ENCODE measurements at regions of chr6 and their contacts with region 1.

Region 1: DNA sequence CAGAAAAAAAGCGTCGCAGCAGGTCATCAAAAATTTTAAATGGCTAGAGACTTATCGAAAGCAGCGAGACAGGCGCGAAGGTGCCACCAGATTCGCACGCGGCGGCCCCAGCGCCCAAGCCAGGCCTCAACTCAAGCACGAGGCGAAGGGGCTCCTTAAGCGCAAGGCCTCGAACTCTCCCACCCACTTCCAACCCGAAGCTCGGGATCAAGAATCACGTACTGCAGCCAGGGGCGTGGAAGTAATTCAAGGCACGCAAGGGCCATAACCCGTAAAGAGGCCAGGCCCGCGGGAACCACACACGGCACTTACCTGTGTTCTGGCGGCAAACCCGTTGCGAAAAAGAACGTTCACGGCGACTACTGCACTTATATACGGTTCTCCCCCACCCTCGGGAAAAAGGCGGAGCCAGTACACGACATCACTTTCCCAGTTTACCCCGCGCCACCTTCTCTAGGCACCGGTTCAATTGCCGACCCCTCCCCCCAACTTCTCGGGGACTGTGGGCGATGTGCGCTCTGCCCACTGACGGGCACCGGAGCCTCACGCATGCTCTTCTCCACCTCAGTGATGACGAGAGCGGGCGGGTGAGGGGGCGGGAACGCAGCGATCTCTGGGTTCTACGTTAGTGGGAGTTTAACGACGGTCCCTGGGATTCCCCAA is at the start of gene EEF1A1:
- DNase-seq: peak; percentile 99 to 100 (median 99)
- H3K4me3 ChIP-seq: peak within 1 kb of the TSS; percentile 98
- H3K4me3 Mint-ChIP-seq: peak within 1 kb of the TSS; percentile 89 to 99 (median 96)
- H3K27ac ChIP-seq: peak within 1 kb of the TSS; percentile 100
- H3K27ac Mint-ChIP-seq: peak within 1 kb of the TSS; percentile 92 to 99 (median 99)
- H3K4me1 ChIP-seq: peaks cover 48% of the 10 kb centered on the region
- H3K4me1 Mint-ChIP-seq: peaks cover 64 to 71% (median 64%) of the 10 kb centered on the region in 3 donors
- H3K27me3 ChIP-seq: no peaks in the 10 kb centered on the region
- H3K27me3 Mint-ChIP-seq: peaks cover 0 to 11% of the 10 kb centered on the region in 2 donors
- total RNA-seq, gene EEF1A1: 8,526 to 8,727 TPM

Region 2: DNA sequence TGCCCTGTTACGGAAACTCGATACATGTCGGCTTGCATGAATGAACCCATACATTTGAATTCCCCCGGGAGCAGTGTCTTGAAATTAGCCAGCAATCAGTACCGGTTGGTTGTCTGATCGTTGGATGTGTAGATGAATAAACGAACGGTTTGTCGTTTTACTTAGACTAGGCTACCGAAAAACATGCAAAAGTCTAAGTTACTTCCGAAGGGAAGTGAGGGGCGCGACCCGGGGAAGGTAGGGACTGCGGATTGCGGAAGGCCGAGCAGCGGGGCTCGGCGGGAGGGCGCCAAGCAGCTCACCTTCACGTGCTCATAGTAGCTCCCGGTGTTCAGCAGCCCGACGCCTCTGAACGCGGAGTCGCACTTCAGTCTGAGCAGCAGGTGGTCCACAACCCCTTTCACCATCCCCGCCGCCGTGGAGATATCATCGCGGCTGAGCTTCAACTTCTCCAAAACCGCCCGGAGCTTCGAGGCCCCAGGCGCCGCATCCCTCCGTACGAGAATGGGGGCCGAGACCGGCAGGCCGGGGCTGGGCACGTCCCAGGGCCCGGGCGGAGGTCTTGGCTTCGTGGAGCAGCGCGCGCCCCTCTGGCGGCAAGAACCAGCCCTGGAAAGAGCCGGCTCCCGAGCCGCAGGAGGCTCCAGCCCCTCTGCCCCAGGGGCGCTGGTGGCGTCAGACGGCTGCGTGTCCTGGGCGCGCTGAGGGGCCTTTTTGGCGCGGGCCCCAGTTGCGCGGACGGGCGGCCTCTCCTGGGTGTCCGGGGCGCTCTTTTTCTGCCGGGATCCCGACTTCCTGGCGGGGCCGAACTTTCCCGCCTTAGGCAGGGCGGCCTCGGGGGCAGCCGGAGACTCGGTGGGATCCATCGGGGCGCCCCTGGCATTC is 69.4 kb before region 1 on chr6:
- CTCF ChIA-PET with region 1: interaction called, 4 read pairs
- POLR2A ChIA-PET with region 1: interaction called, 17 read pairs
- DNase-seq: peak; percentile 23 to 65 (median 43)
- H3K4me3 ChIP-seq: peak overlapping the region; percentile 78
- H3K4me3 Mint-ChIP-seq: peak overlapping the region; percentile 94 to 100 (median 97)
- H3K27ac ChIP-seq: peak overlapping the region; percentile 33
- H3K27ac Mint-ChIP-seq: peak overlapping the region; percentile 84 to 99 (median 92)
- H3K4me1 ChIP-seq: peaks cover 15% of the 10 kb centered on the region
- H3K4me1 Mint-ChIP-seq: peaks cover 21 to 44% (median 37%) of the 10 kb centered on the region in 3 donors
- H3K27me3 ChIP-seq: no peaks in the 10 kb centered on the region
- H3K27me3 Mint-ChIP-seq: peaks cover 0 to 2% of the 10 kb centered on the region in 2 donors

Region 3: DNA sequence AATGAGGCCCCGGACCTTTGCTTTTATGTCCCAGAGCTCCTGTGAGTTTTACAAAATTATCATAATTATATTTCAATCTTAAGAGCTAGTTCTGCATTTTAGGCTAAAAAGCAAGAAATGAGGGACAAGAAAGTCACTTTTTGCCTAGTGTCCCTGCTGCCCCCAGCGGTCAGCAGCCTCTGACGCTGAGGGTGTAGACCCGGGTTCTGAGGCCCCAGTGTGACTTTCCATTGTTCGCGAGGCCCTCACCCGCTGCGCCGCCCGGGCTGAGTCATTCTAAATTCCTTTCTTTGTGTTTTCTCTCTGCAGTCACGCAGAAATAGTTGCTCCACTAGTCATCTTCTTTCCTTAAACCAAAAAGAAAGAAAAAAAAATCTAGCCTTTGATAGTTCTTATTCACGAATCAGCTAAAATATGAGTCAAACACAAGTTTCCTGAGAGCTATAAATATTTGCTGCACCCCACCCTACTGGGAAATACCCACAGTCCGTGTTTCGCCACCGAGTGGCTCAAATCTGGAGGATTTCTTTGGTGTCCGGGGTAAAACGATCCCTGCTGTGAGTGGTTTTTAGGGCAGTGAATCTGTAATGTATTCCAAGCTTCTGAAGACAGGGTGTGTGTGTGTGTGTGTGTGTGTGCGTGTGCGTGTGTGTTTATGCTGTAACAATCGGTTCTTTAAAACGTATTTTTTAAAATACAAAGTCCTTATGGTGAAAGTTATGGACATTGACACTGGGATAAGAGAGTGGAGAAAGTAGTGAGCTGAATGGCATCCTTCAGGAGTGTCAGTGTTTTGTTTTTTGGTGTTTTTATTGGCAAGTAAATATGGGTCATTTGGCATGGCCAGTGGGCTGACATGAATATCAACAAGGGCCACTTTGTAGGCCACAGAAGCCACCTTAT is 59.7 kb after region 1 on chr6:
- CTCF ChIA-PET with region 1: interaction called, 6 read pairs
- POLR2A ChIA-PET with region 1: interaction called, 67 read pairs
- DNase-seq: peak; percentile 17 to 72 (median 36)
- H3K4me3 ChIP-seq: peak overlapping the region; percentile 33
- H3K4me3 Mint-ChIP-seq: peak overlapping the region; percentile 47 to 88 (median 80)
- H3K27ac ChIP-seq: peak overlapping the region; percentile 66
- H3K27ac Mint-ChIP-seq: peak overlapping the region; percentile 89 to 99 (median 95)
- H3K4me1 ChIP-seq: peaks cover 23% of the 10 kb centered on the region
- H3K4me1 Mint-ChIP-seq: peaks cover 18 to 32% (median 20%) of the 10 kb centered on the region in 3 donors
- H3K27me3 ChIP-seq: no peaks in the 10 kb centered on the region
- H3K27me3 Mint-ChIP-seq: no peaks in the 10 kb centered on the region

Region 4: GRCh38 chr6:73585566-73586415 is 65.0 kb after region 1 on chr6:
- CTCF ChIA-PET with region 1: interaction called, 6 read pairs
- POLR2A ChIA-PET with region 1: interaction called, 67 read pairs
- DNase-seq: peak in 4 of 5 donors; percentile 17 to 67 (median 54)
- H3K4me3 ChIP-seq: peak overlapping the region; percentile 46
- H3K4me3 Mint-ChIP-seq: peak overlapping the region; percentile 55 to 87 (median 84)
- H3K27ac ChIP-seq: peak overlapping the region; percentile 82
- H3K27ac Mint-ChIP-seq: peak overlapping the region; percentile 96 to 99 (median 98)
- H3K4me1 ChIP-seq: peaks cover 8% of the 10 kb centered on the region
- H3K4me1 Mint-ChIP-seq: peaks cover 21 to 38% (median 27%) of the 10 kb centered on the region in 3 donors
- H3K27me3 ChIP-seq: no peaks in the 10 kb centered on the region
- H3K27me3 Mint-ChIP-seq: no peaks in the 10 kb centered on the region

Region 5: GRCh38 chr6:73610444-73611275 is 89.8 kb after region 1 on chr6:
- CTCF ChIA-PET with region 1: interaction called, 141 read pairs
- POLR2A ChIA-PET with region 1: interaction called, 16 read pairs
- DNase-seq: peak in 2 of 5 donors; percentile 38 to 56
- H3K4me3 ChIP-seq: no peak overlapping the region
- H3K4me3 Mint-ChIP-seq: no peak overlapping the region
- H3K27ac ChIP-seq: no peak overlapping the region
- H3K27ac Mint-ChIP-seq: peak overlapping the region in 4 of 8 donors; percentile 2 to 69 (median 8)
- H3K4me1 ChIP-seq: peaks cover 3% of the 10 kb centered on the region
- H3K4me1 Mint-ChIP-seq: peaks cover 4 to 6% (median 6%) of the 10 kb centered on the region in 3 donors
- H3K27me3 ChIP-seq: no peaks in the 10 kb centered on the region
- H3K27me3 Mint-ChIP-seq: no peaks in the 10 kb centered on the region

Region 6: GRCh38 chr6:73653571-73654424 is 133.0 kb after region 1 on chr6 and contains the start of gene SLC17A5:
- CTCF ChIA-PET with region 1: interaction called, 32 read pairs
- POLR2A ChIA-PET with region 1: interaction called, 54 read pairs
- DNase-seq: peak; percentile 82 to 91 (median 87)
- H3K4me3 ChIP-seq: peak within 1 kb of the TSS; percentile 97
- H3K4me3 Mint-ChIP-seq: peak within 1 kb of the TSS; percentile 99 to 100 (median 99)
- H3K27ac ChIP-seq: peak within 1 kb of the TSS; percentile 93
- H3K27ac Mint-ChIP-seq: peak within 1 kb of the TSS; percentile 93 to 99 (median 98)
- H3K4me1 ChIP-seq: peaks cover 22% of the 10 kb centered on the region
- H3K4me1 Mint-ChIP-seq: peaks cover 40 to 47% (median 46%) of the 10 kb centered on the region in 3 donors
- H3K27me3 ChIP-seq: no peaks in the 10 kb centered on the region
- H3K27me3 Mint-ChIP-seq: no peaks in the 10 kb centered on the region
- total RNA-seq, gene SLC17A5: 5.4 to 5.6 TPM